Heart left ventricle (tissue), 16 donors: ENCODE measurements at regions of chr2 and their contacts with region 1.

Region 1: GRCh38 chr2:156589381-156590079 is 153.4 kb downstream of the GPD2 start:
- DNase-seq: peak in 1 of 5 donors; percentile 6
- ATAC-seq: peak in 3 of 4 donors; percentile 36 to 55 (median 45)
- H3K4me3 ChIP-seq: no peak overlapping the region
- H3K27ac ChIP-seq: no peak overlapping the region
- H3K4me1 ChIP-seq: peaks cover 0 to 7% (median 0%) of the 10 kb centered on the region in 12 donors
- H3K27me3 ChIP-seq: no peaks in the 10 kb centered on the region
- CTCF ChIP-seq: peak; percentile 31 to 71 (median 58)
- POLR2A ChIP-seq: no peak

Region 2: DNA sequence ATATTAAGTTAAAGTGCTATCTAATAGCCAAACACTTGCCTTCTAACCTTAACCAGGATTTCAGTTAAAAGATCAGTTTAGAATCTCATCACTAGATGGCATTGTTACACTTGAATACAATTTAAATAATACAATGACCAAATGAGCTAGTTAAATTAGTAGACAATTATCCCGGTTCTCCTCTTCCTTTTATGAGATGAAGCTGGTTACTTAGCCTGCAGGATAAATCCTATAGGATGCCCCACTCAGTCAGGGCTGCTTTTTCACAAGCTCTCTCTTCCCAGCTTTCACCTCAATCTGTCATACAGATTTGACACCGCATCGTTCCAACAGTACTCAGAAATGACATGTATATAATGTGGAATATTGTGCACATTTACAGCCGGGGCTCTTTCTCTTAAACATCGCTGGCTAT is 1212.3 kb before region 1 on chr2:
- intact Hi-C with region 1: loop called in 5 of 10 experiments (anchors 5 to 10 kb)
- DNase-seq: no peak
- ATAC-seq: no peak
- H3K4me3 ChIP-seq: no peak overlapping the region
- H3K27ac ChIP-seq: no peak overlapping the region
- H3K4me1 ChIP-seq: no peaks in the 10 kb centered on the region
- H3K27me3 ChIP-seq: peaks cover 0 to 6% (median 0%) of the 10 kb centered on the region in 9 donors
- CTCF ChIP-seq: peak in 9 of 12 donors; percentile 14 to 48 (median 27)
- POLR2A ChIP-seq: no peak

Region 3: DNA sequence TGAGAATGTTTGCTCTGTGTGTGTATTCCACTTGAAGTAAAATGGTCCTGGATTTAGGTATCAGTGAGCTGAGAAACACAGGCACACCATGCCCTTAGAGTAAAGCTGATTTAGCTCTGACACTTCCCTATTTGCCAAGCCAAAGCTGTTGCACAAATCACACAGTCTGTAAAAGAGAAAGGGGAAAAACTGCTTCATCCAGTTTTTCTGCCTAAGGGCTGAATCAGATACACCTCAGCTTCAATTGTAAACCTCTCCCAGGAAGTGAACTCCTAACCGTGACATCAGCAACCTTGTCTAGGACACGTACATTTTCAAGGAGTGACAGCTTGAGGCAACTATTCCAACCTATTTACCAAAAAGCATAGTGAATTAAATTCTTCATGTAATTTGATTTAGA is 407.4 kb before region 1 on chr2:
- intact Hi-C with region 1: loop called in 2 of 10 experiments (anchors 10 kb)
- DNase-seq: no peak
- ATAC-seq: no peak
- H3K4me3 ChIP-seq: no peak overlapping the region
- H3K27ac ChIP-seq: no peak overlapping the region
- H3K4me1 ChIP-seq: no peaks in the 10 kb centered on the region
- H3K27me3 ChIP-seq: peaks cover 0 to 6% (median 0%) of the 10 kb centered on the region in 9 donors
- CTCF ChIP-seq: no peak
- POLR2A ChIP-seq: no peak

Region 4: DNA sequence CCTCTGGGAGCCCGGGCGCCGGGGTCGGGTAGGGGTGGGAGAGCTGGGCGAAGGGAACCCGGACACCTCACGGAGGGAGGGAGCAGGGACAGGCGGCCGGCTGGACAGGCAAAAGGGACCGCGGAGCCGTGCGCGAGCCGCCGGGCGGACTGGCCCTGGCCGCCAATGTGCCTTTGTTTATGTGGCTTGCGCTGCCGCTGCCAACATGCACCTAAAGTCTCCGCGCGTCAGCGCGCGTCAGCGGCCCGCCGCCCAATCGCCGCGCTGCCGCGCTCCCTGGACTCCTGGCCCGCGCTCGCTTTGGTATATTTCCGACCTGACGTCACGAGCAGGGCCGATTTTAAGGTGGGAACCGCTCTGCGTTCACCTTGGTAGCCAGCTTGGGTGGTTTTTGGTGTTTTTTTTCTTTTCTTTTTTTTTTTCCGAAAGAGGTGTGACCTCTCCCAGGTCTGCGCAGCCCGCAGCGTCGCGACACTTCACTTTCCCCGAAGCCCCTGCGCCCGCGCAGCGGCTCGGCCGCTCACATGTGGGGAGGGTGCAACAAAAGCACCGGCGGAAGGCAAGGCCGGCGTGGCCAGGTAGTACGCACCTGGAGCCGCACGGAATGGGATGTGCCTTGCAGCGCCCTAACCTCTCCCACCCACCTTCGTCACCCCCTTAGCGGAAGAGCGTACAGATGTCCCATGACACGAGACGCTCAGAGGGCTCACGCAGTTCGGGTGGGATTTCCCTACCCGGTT is 256.8 kb before region 1 on chr2 and contains the start of gene NR4A2:
- intact Hi-C with region 1: loop called in 6 of 10 experiments (anchors 5 kb)
- DNase-seq: peak; percentile 91 to 93 (median 91)
- ATAC-seq: peak; percentile 62 to 81 (median 74)
- H3K4me3 ChIP-seq: peak within 1 kb of the TSS; percentile 44 to 87 (median 80)
- H3K27ac ChIP-seq: peak within 1 kb of the TSS; percentile 97 to 100 (median 99)
- H3K4me1 ChIP-seq: peaks cover 0 to 34% (median 7%) of the 10 kb centered on the region in 12 donors
- H3K27me3 ChIP-seq: peaks cover 0 to 29% (median 13%) of the 10 kb centered on the region in 9 donors
- CTCF ChIP-seq: no peak
- POLR2A ChIP-seq: peak; percentile 37 to 93
- total RNA-seq, gene NR4A2: 0.63 to 14.2 (median 1.1) TPM

Region 5: DNA sequence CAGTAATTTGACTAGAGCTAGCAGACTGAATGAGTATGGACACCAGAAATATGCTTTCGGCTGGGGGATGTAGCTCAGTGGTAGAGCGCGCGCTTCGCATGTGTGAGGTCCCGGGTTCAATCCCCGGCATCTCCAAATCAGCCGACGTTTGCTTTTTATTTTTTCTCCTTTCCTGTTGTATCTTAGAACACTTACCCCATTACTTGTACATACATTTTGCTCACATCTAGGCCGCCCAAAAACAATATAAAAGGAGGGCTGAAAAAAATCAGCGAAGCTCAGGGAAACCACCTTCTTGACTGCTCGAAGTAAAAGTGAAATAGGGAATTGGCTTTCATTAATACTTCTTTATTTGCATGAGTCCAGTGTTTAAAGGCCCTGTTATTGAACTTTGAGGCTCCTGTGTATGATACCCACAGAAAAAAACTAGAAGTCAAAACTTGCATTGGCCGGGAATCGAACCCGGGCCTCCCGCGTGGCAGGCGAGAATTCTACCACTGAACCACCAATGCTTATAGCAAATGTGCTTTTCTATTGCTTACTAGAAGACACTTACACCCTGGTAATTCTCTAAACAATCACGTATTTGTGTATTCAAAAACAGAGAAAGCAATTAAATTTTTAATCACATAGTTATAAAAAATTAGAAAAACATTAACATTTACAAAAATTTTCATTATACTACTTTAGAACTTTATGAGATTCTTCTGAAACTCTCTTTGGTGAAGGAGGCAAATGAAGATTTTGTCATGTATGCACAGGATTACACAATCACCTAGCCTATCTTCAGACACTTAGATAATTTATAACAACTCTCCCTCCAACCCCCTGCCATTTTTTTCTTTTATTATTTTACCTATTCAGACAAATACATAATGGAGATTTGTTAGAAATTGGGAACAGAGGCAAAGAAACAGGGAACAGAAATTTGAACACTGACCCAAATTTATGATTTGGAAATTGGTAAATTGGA is 188.5 kb before region 1 on chr2:
- intact Hi-C with region 1: loop called in 3 of 10 experiments (anchors 5 to 10 kb)
- DNase-seq: peak; percentile 55 to 78 (median 72)
- ATAC-seq: peak; percentile 85 to 92 (median 90)
- H3K4me3 ChIP-seq: peak overlapping the region; percentile 66 to 93 (median 76)
- H3K27ac ChIP-seq: peak overlapping the region; percentile 80 to 97 (median 92)
- H3K4me1 ChIP-seq: peaks cover 0 to 25% (median 5%) of the 10 kb centered on the region in 12 donors
- H3K27me3 ChIP-seq: no peaks in the 10 kb centered on the region
- CTCF ChIP-seq: peak in 1 of 12 donors; percentile 1
- POLR2A ChIP-seq: no peak

Region 6: GRCh38 chr2:156892467-156893281 is 303.1 kb after region 1 on chr2:
- intact Hi-C with region 1: loop called in 2 of 10 experiments (anchors 5 kb)
- DNase-seq: no peak
- ATAC-seq: peak in 3 of 4 donors; percentile 48 to 69 (median 57)
- H3K4me3 ChIP-seq: peak overlapping the region in 11 of 12 donors; percentile 12 to 42 (median 32)
- H3K27ac ChIP-seq: no peak overlapping the region
- H3K4me1 ChIP-seq: peaks cover 0 to 6% (median 0%) of the 10 kb centered on the region in 12 donors
- H3K27me3 ChIP-seq: peaks cover 0 to 12% (median 0%) of the 10 kb centered on the region in 9 donors
- CTCF ChIP-seq: peak in 10 of 12 donors; percentile 36 to 59 (median 46)
- POLR2A ChIP-seq: no peak